ENCODE measurements at regions of chr12 and their contacts with region 1.

Region 1: GRCh38 chr12:52582971-52583456 is 9.4 kb upstream of the KRT74 start:
- DNase-seq: peak; percentile 48 to 83 (median 70)
- ATAC-seq: peak; percentile 27
- H3K4me3 ChIP-seq: no peak overlapping the region
- H3K4me3 Mint-ChIP-seq: no peak overlapping the region
- H3K27ac ChIP-seq: no peak overlapping the region
- H3K27ac Mint-ChIP-seq: peak overlapping the region; percentile 52
- H3K4me1 ChIP-seq: peaks cover 45% of the 10 kb centered on the region
- H3K4me1 Mint-ChIP-seq: peaks cover 48% of the 10 kb centered on the region
- H3K27me3 ChIP-seq: no peaks in the 10 kb centered on the region
- H3K27me3 Mint-ChIP-seq: peaks cover 3% of the 10 kb centered on the region
- CTCF ChIP-seq: peak; percentile 76

Region 2: GRCh38 chr12:52156736-52157565 is 426.1 kb before region 1 on chr12:
- CTCF ChIA-PET with region 1: no interaction called
- POLR2A ChIA-PET with region 1: no interaction called
- intact Hi-C with region 1: loop called in 1 of 2 experiments (anchors 10 kb)
- DNase-seq: peak; percentile 53 to 77 (median 73)
- ATAC-seq: peak; percentile 35
- H3K4me3 ChIP-seq: no peak overlapping the region
- H3K4me3 Mint-ChIP-seq: no peak overlapping the region
- H3K27ac ChIP-seq: no peak overlapping the region
- H3K27ac Mint-ChIP-seq: no peak overlapping the region
- H3K4me1 ChIP-seq: peaks cover 33% of the 10 kb centered on the region
- H3K4me1 Mint-ChIP-seq: peaks cover 22% of the 10 kb centered on the region
- H3K27me3 ChIP-seq: no peaks in the 10 kb centered on the region
- H3K27me3 Mint-ChIP-seq: no peaks in the 10 kb centered on the region
- CTCF ChIP-seq: peak; percentile 66

Region 3: DNA sequence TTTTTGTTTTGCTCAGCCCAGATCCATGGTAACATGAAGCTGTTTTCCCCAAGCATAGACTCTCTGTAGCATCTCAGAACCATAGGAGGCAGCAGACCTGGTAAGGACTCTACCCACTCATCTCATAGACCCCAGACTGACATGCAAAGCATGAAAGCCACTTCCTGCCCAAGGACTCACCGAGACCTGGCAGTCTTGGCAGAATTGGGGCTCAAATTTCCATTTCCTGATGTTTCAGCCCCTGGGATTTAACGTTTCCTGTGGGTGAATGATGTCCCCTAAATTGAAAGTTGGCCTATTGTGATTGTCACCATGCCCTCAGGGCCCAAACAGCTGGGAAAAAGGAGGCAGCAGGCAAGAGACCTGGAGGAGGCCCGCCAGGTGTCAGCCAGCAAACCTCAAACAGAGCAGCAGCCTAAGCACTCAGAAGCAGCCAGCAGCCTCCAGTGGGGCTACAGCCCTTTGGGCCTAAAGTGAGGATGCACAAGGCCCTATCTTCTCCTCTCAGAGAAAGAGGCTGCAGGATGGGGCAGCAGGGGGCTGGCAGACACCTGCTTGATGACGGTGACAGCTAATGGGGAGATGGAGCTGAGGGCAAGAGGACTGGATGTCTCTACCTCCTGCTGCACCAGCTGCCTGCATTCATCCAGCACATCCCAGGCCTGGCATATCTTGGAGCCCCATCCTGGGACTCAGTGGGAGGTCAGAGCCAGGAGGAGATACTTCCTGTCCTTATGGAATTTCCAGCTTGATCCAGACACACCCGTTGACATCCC is 224.3 kb before region 1 on chr12:
- CTCF ChIA-PET with region 1: no interaction called
- POLR2A ChIA-PET with region 1: no interaction called
- intact Hi-C with region 1: no loop called
- DNase-seq: peak in 8 of 9 experiments; percentile 4 to 77 (median 41)
- ATAC-seq: peak; percentile 93
- H3K4me3 ChIP-seq: no peak overlapping the region
- H3K4me3 Mint-ChIP-seq: peak overlapping the region; percentile 2
- H3K27ac ChIP-seq: no peak overlapping the region
- H3K27ac Mint-ChIP-seq: peak overlapping the region; percentile 67
- H3K4me1 ChIP-seq: peaks cover 26% of the 10 kb centered on the region
- H3K4me1 Mint-ChIP-seq: peaks cover 31% of the 10 kb centered on the region
- H3K27me3 ChIP-seq: peaks cover 0 to 4% of the 10 kb centered on the region in 2 experiments
- H3K27me3 Mint-ChIP-seq: peaks cover 16% of the 10 kb centered on the region
- CTCF ChIP-seq: peak; percentile 33

Region 4: DNA sequence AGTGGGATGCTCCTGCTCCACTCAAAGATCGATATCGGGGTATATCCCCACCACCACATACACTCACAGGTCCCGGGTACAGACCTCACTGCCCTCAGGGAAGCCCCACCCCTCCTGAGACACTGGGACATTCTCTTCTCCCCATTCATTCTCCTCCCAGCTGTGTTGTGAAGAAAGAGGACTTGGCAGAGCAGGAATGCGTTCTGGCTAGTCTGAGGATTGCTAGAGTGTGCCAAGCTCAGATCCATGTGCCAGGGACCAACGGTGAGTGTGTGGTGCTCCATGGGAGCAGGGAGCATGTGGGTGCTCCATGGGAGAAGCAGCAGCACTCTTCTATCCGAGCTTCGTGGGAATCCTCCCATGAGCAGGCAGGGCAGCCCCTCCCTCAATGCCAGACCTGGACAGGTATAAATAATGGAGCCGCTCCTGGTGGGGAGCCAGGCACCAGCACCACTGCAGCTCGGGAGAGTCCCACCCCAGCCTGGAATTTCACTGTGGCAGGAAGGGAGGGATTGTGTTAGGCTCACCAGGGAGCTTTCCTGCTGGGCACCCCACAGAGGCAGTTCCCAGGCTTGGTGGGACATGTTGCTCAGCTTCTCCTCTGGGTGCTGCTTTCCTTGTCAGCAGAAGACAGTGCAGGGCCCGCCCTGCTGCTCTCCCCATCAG is 60.5 kb before region 1 on chr12:
- CTCF ChIA-PET with region 1: no interaction called
- POLR2A ChIA-PET with region 1: no interaction called
- intact Hi-C with region 1: no loop called
- DNase-seq: peak in 1 of 9 experiments; percentile 40
- ATAC-seq: no peak
- H3K4me3 ChIP-seq: no peak overlapping the region
- H3K4me3 Mint-ChIP-seq: no peak overlapping the region
- H3K27ac ChIP-seq: no peak overlapping the region
- H3K27ac Mint-ChIP-seq: no peak overlapping the region
- H3K4me1 ChIP-seq: peaks cover 14% of the 10 kb centered on the region
- H3K4me1 Mint-ChIP-seq: peaks cover 7% of the 10 kb centered on the region
- H3K27me3 ChIP-seq: no peaks in the 10 kb centered on the region
- H3K27me3 Mint-ChIP-seq: no peaks in the 10 kb centered on the region
- CTCF ChIP-seq: no peak

Region 5: DNA sequence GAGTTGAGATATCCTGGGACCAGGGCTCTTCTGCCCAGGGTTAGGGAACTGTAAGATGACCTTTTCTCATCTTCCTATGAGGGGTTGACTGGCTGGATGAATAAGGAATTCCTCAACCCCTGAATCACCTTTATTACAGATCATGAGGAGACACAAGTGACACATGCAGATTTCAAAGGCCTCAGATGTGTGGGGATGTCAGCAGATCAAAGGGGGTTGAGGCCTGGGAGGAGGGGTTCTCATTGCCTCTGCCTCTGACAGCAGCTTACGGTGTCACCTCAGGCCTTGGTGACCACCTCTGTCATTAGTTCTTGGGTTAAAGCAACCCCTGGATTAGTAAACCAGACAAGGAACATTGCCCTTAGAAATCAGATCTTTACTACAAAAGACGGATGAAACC is 20.3 kb after region 1 on chr12:
- CTCF ChIA-PET with region 1: interaction called, 94 read pairs
- POLR2A ChIA-PET with region 1: interaction called, 3 read pairs
- intact Hi-C with region 1: loop called (anchors 1 to 2 kb)
- DNase-seq: peak in 7 of 9 experiments; percentile 22 to 75 (median 55)
- ATAC-seq: peak; percentile 92
- H3K4me3 ChIP-seq: no peak overlapping the region
- H3K4me3 Mint-ChIP-seq: no peak overlapping the region
- H3K27ac ChIP-seq: no peak overlapping the region
- H3K27ac Mint-ChIP-seq: peak overlapping the region; percentile 70
- H3K4me1 ChIP-seq: peaks cover 65% of the 10 kb centered on the region
- H3K4me1 Mint-ChIP-seq: peaks cover 64% of the 10 kb centered on the region
- H3K27me3 ChIP-seq: no peaks in the 10 kb centered on the region
- H3K27me3 Mint-ChIP-seq: peaks cover 13% of the 10 kb centered on the region
- CTCF ChIP-seq: no peak

Region 6: GRCh38 chr12:52615208-52615868 is 32.3 kb after region 1 on chr12:
- CTCF ChIA-PET with region 1: interaction called, 94 read pairs
- POLR2A ChIA-PET with region 1: interaction called, 32 read pairs
- intact Hi-C with region 1: loop called (anchors 1 kb)
- DNase-seq: peak in 3 of 9 experiments; percentile 35 to 61 (median 48)
- ATAC-seq: peak; percentile 45
- H3K4me3 ChIP-seq: no peak overlapping the region
- H3K4me3 Mint-ChIP-seq: peak overlapping the region; percentile 53
- H3K27ac ChIP-seq: peak overlapping the region; percentile 58 to 60
- H3K27ac Mint-ChIP-seq: peak overlapping the region; percentile 95
- H3K4me1 ChIP-seq: peaks cover 88% of the 10 kb centered on the region
- H3K4me1 Mint-ChIP-seq: peaks cover 82% of the 10 kb centered on the region
- H3K27me3 ChIP-seq: no peaks in the 10 kb centered on the region
- H3K27me3 Mint-ChIP-seq: no peaks in the 10 kb centered on the region
- CTCF ChIP-seq: no peak

Region 7: GRCh38 chr12:52645120-52645761 is 62.2 kb after region 1 on chr12:
- CTCF ChIA-PET with region 1: interaction called, 8 read pairs
- POLR2A ChIA-PET with region 1: interaction called, 14 read pairs
- intact Hi-C with region 1: loop called (anchors 1 kb)
- DNase-seq: peak; percentile 22 to 94 (median 64)
- ATAC-seq: peak; percentile 88
- H3K4me3 ChIP-seq: no peak overlapping the region
- H3K4me3 Mint-ChIP-seq: peak overlapping the region; percentile 41
- H3K27ac ChIP-seq: peak overlapping the region; percentile 79 to 82
- H3K27ac Mint-ChIP-seq: peak overlapping the region; percentile 99
- H3K4me1 ChIP-seq: peaks cover 83% of the 10 kb centered on the region
- H3K4me1 Mint-ChIP-seq: peaks cover 87% of the 10 kb centered on the region
- H3K27me3 ChIP-seq: no peaks in the 10 kb centered on the region
- H3K27me3 Mint-ChIP-seq: no peaks in the 10 kb centered on the region
- CTCF ChIP-seq: no peak

Region 8: DNA sequence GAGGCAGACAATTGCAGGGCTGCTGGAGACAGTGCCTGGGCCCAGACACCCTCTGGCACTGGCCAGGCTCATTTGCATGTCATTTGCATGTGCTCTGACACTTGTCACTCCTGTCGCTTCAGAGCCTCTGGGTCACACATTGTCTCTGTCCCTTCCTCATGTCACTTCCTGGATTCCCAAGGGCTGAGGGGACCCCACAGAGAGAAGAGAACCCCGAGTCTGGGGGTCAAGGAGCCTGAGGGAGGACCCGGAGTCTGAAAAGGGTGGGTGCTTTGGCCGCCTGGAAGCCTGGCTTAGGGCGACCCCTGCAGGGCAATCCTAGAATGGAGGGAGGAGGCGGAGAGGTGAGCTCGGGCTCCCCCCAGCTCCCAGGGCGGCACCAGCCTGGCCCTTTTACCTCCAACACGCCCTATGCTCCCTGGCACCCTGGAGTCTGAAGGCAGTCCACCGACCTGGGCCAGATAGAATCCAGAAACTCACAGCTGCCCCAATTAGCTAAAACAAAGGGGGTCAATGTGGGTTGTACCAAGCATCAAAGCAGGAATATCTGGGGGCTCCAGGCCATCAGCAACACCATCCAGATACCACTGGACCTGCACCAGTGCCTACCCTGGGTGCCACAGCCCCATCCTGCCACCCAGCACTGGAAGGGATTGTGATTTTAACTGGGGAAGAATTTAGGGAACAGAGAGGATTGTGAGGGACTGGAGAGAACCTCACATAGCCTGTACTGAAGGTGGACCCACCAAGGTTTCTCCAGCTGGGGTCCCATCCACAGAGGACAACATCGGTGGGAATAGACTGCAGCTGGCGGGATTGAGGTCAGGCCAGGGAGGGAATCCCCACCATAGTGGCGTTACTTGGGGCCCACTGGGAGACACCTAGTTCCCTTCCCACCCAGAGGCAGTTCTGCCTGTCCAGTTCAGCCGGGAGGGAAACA is 287.6 kb after region 1 on chr12:
- CTCF ChIA-PET with region 1: interaction called, 950 read pairs
- POLR2A ChIA-PET with region 1: interaction called, 8 read pairs
- intact Hi-C with region 1: loop called (anchors 1 kb)
- DNase-seq: peak; percentile 71 to 92 (median 81)
- ATAC-seq: peak; percentile 71
- H3K4me3 ChIP-seq: no peak overlapping the region
- H3K4me3 Mint-ChIP-seq: no peak overlapping the region
- H3K27ac ChIP-seq: peak overlapping the region; percentile 28 to 64
- H3K27ac Mint-ChIP-seq: peak overlapping the region; percentile 41
- H3K4me1 ChIP-seq: peaks cover 33% of the 10 kb centered on the region
- H3K4me1 Mint-ChIP-seq: peaks cover 33% of the 10 kb centered on the region
- H3K27me3 ChIP-seq: no peaks in the 10 kb centered on the region
- H3K27me3 Mint-ChIP-seq: no peaks in the 10 kb centered on the region
- CTCF ChIP-seq: peak; percentile 84

Measured in CD8-positive, alpha-beta T cell (primary cell).